ENCODE measurements at regions of chr9 and their contacts with region 1.

Region 1: DNA sequence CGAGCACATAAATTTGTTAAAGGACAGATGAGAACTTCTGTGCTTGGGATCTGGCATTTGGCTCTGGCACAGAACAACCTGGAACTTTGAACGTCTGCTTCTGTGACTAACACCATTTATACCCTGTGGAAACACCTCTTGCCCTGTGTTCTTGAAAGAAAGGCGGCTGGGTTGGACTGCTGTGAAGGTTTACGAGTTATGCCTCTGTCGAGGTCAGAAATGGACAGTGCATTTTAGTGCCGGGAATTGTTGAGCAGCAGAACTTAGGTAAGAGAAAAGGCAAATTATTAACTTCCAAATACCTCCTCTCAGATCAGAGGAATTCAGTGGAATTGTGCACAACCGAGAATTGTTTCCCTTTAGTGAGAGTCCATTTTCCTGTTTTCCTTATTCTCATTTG is 14.1 kb upstream of the INIP start:
- DNase-seq: peak; percentile 52 to 80
- H3K4me3 ChIP-seq: no peak overlapping the region
- H3K4me3 Mint-ChIP-seq: peak overlapping the region; percentile 47
- H3K27ac Mint-ChIP-seq: peak overlapping the region; percentile 69
- H3K4me1 ChIP-seq: peaks cover 11% of the 10 kb centered on the region
- H3K4me1 Mint-ChIP-seq: peaks cover 8% of the 10 kb centered on the region
- H3K27me3 ChIP-seq: no peaks in the 10 kb centered on the region
- H3K27me3 Mint-ChIP-seq: no peaks in the 10 kb centered on the region
- CTCF ChIP-seq: no peak

Region 2: GRCh38 chr9:112717661-112718341 is 14.2 kb before region 1 on chr9 and contains the start of gene INIP:
- CTCF ChIA-PET with region 1: interaction called, 7 read pairs
- POLR2A ChIA-PET with region 1: interaction called, 12 read pairs
- intact Hi-C with region 1: loop called (anchors 1 kb)
- DNase-seq: peak; percentile 98
- H3K4me3 ChIP-seq: peak within 1 kb of the TSS; percentile 46
- H3K4me3 Mint-ChIP-seq: peak within 1 kb of the TSS; percentile 88
- H3K27ac Mint-ChIP-seq: peak within 1 kb of the TSS; percentile 87
- H3K4me1 ChIP-seq: no peaks in the 10 kb centered on the region
- H3K4me1 Mint-ChIP-seq: peaks cover 7% of the 10 kb centered on the region
- H3K27me3 ChIP-seq: no peaks in the 10 kb centered on the region
- H3K27me3 Mint-ChIP-seq: no peaks in the 10 kb centered on the region
- CTCF ChIP-seq: no peak
- total RNA-seq, gene INIP: 30.2 and 31.9 TPM in 2 replicates